ENCODE measurements at regions of chr15 and their contacts with region 1.

Region 1: GRCh38 chr15:31488426-31489204 is 162.0 kb downstream of the KLF13 start:
- DNase-seq: peak; percentile 61 to 89 (median 84)
- H3K4me3 ChIP-seq: no peak overlapping the region
- H3K27ac ChIP-seq: no peak overlapping the region
- H3K4me1 ChIP-seq: peaks cover 0 to 11% (median 3%) of the 10 kb centered on the region in 3 donors
- H3K27me3 ChIP-seq: no peaks in the 10 kb centered on the region
- CTCF ChIP-seq: peak; percentile 90

Region 2: GRCh38 chr15:31106495-31107300 is 381.9 kb before region 1 on chr15:
- intact Hi-C with region 1: no loop called
- DNase-seq: no peak
- H3K4me3 ChIP-seq: no peak overlapping the region
- H3K27ac ChIP-seq: no peak overlapping the region
- H3K4me1 ChIP-seq: no peaks in the 10 kb centered on the region
- H3K27me3 ChIP-seq: no peaks in the 10 kb centered on the region
- CTCF ChIP-seq: no peak

Region 3: DNA sequence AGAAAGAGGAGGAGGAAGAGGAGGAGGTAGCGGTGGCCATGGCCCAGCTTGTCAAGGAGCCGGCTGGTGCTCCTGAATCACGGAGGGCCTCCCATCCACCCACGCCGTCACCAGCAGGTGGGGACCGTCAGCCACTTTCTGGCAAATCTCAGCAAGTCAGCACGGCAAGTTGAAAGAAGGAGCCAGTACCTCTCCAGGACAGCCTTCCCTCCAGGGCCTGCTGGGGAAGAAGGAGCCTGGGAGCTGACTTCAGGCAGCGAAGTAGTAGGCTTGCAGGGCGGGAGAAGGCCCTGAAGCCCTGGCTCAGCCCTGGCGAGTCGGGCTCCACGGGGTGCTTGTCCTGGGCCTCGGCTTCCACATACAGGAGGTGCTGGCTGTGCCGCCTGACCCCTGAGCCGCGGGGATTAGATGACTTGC is 287.9 kb before region 1 on chr15:
- intact Hi-C with region 1: loop called (anchors 5 kb)
- DNase-seq: peak; percentile 87 to 93 (median 90)
- H3K4me3 ChIP-seq: no peak overlapping the region
- H3K27ac ChIP-seq: no peak overlapping the region
- H3K4me1 ChIP-seq: peaks cover 0 to 12% (median 0%) of the 10 kb centered on the region in 3 donors
- H3K27me3 ChIP-seq: no peaks in the 10 kb centered on the region
- CTCF ChIP-seq: peak; percentile 79

Region 4: GRCh38 chr15:31302778-31303725 is 185.6 kb before region 1 on chr15:
- intact Hi-C with region 1: no loop called
- DNase-seq: peak in 2 of 5 donors; percentile 7 to 75
- H3K4me3 ChIP-seq: no peak overlapping the region
- H3K27ac ChIP-seq: no peak overlapping the region
- H3K4me1 ChIP-seq: peaks cover 0 to 5% (median 0%) of the 10 kb centered on the region in 3 donors
- H3K27me3 ChIP-seq: no peaks in the 10 kb centered on the region
- CTCF ChIP-seq: no peak

Region 5: GRCh38 chr15:31352911-31353811 is 135.5 kb before region 1 on chr15:
- intact Hi-C with region 1: loop called (anchors 10 kb)
- DNase-seq: peak in 3 of 5 donors; percentile 64 to 92 (median 71)
- H3K4me3 ChIP-seq: peak overlapping the region in 1 of 3 donors; percentile 32
- H3K27ac ChIP-seq: peak overlapping the region; percentile 91 to 94
- H3K4me1 ChIP-seq: peaks cover 0 to 75% (median 69%) of the 10 kb centered on the region in 3 donors
- H3K27me3 ChIP-seq: no peaks in the 10 kb centered on the region
- CTCF ChIP-seq: no peak

Region 6: DNA sequence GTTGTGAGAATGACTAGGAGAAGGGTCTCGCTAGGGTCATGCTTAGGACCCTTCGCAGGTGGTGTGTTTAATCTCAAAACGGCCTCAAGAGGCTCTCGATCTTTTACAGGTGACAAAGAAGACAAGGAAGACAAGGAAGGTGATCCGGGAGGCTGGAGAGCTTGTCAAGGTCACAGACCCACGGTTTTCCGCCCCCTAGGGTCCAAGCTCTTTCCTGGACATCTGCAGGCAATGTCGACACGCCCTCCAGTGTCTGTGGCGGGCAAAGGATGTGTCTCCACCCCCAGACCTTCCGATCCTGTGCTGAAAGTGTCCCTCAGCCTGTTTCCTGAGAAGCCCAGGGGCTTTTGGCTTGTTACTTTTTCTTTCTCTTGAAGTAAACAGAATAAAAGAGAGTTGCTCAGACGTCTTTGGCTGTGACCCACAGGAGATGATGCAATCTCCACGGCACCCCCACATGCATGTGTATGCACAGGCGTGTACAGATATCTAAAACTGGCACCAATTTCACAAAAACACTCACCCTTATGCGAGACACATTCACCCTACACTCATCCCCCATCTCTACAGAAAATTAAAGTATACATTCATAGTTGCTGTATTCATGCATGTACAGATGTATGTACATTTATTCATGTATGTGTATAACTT is 53.2 kb before region 1 on chr15:
- intact Hi-C with region 1: no loop called
- DNase-seq: peak; percentile 84 to 91 (median 85)
- H3K4me3 ChIP-seq: peak overlapping the region; percentile 6 to 23 (median 14)
- H3K27ac ChIP-seq: peak overlapping the region; percentile 26 to 34
- H3K4me1 ChIP-seq: peaks cover 0 to 7% (median under 1%) of the 10 kb centered on the region in 3 donors
- H3K27me3 ChIP-seq: no peaks in the 10 kb centered on the region
- CTCF ChIP-seq: peak; percentile 59